ENCODE measurements at regions of chr7 and their contacts with region 1.

Region 1: GRCh38 chr7:141014524-141015395 is at the start of gene MRPS33:
- DNase-seq: peak; percentile 95
- ATAC-seq: peak; percentile 99
- H3K4me3 ChIP-seq: peak within 1 kb of the TSS; percentile 84 to 88 (median 87)
- H3K27ac ChIP-seq: peak within 1 kb of the TSS; percentile 82
- H3K4me1 ChIP-seq: peaks cover 30% of the 10 kb centered on the region
- H3K27me3 ChIP-seq: no peaks in the 10 kb centered on the region; a peak in 1 of 5 replicates
- CTCF ChIP-seq: peak; percentile 98
- EP300 ChIP-seq: peak; percentile 39 to 48; a peak in 3 of 4 replicates
- POLR2A ChIP-seq: peak; percentile 92 to 97
- RAD21 ChIP-seq: no peak; the same call in none of the 2 replicates
- total RNA-seq, gene MRPS33: 91.0 and 120 TPM in 2 replicates

Region 2: GRCh38 chr7:140517546-140518369 is 497.0 kb before region 1 on chr7:
- CTCF ChIA-PET with region 1: no interaction called
- POLR2A ChIA-PET with region 1: no interaction called
- in situ Hi-C with region 1: no loop called
- intact Hi-C with region 1: loop called (anchors 5 kb)
- DNase-seq: peak; percentile 73
- ATAC-seq: peak; percentile 96
- H3K4me3 ChIP-seq: no peak overlapping the region; a peak in 1 of 6 replicates
- H3K27ac ChIP-seq: no peak overlapping the region
- H3K4me1 ChIP-seq: peaks cover 11% of the 10 kb centered on the region; the same call in 1 of the 2 replicates
- H3K27me3 ChIP-seq: peaks cover 0 to 14% of the 10 kb centered on the region in 2 experiments; a peak in 1 of 5 replicates
- CTCF ChIP-seq: peak; percentile 98
- EP300 ChIP-seq: no peak
- POLR2A ChIP-seq: no peak
- RAD21 ChIP-seq: peak; percentile 93

Region 3: DNA sequence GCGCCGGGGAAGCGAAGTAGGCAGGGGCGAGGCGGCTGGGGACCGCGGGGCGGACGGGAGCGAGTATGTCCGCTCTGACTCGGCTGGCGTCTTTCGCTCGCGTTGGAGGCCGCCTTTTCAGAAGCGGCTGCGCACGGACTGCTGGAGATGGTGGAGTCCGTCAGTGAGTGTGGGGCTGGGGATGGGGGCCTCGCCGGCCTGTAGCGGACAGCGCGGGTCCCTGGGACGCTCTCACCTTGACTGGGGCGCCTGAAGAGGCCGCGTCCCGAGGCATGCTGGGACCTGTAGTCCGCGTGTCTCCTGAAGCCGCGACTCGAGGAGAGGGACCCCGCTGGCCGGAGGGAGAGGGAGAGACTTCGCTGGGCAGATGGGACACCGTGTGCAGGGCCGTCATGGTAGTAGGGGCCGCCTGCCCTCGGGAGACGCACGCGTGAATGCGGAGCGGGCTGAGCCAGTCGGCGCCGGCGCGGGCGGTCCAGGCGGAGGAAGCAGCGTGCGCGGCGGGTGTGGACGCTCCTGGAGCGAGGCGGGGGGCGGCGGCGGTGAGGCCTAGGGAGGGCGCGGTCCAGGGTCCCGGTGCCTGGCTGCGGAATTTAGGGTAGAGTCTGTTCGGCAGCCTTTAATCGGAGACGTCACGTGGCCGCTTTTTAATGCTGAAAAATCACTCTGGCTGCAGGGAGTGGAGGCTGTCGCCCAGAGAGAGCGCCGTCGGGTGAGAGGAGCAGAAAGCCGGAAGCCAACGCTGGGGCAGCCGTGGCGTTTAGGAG is 317.9 kb before region 1 on chr7 and contains the start of gene NDUFB2:
- CTCF ChIA-PET with region 1: no interaction called
- POLR2A ChIA-PET with region 1: no interaction called
- in situ Hi-C with region 1: loop called (anchors 25 kb)
- intact Hi-C with region 1: no loop called
- DNase-seq: peak; percentile 67
- ATAC-seq: peak; percentile 92
- H3K4me3 ChIP-seq: peak within 1 kb of the TSS; percentile 74 to 96 (median 80)
- H3K27ac ChIP-seq: peak within 1 kb of the TSS; percentile 81
- H3K4me1 ChIP-seq: peaks cover 28% of the 10 kb centered on the region
- H3K27me3 ChIP-seq: no peaks in the 10 kb centered on the region; a peak in 1 of 5 replicates
- CTCF ChIP-seq: no peak
- EP300 ChIP-seq: no peak
- POLR2A ChIP-seq: peak; percentile 86 to 95
- RAD21 ChIP-seq: peak; percentile 51; the same call in 1 of the 2 replicates
- total RNA-seq, gene NDUFB2: 221 and 276 TPM in 2 replicates

Region 4: DNA sequence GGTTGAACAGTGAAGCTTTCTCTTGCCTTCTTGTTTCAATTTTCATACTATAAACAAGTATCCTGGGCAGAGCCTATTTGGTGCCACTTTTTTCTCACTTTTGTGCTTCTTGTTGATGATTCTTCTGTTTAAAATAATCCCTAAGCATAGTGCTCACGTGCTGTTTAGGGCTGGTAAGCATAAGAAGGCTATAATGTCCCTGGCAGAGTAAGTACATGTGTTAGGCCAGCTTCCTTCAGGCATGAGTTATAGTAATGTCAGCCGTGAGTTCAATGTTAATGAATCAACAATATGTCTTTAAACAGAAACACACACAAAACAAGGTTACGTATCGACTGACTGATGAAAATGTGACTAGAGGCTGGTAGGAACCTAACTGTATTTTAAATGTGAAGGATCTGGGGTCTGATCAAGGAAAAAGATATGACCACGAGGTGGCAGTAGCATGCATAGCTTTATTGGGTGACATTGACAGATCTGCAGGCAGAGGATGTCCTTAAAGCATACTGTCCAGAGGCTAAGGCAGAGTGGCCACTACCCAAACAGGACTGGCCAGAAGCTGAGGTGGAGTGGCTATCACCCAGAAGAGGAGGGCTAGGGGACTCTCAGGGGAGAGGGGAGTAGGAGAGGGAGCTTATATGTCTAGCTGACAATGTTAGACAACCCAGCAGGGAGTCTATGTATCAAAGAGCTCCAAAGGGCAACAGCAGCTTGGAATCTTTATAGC is 203.8 kb before region 1 on chr7:
- CTCF ChIA-PET with region 1: interaction called, 37 read pairs
- POLR2A ChIA-PET with region 1: interaction called, 13 read pairs
- in situ Hi-C with region 1: loop called (anchors 5 kb)
- intact Hi-C with region 1: loop called (anchors 1 kb)
- DNase-seq: peak; percentile 76
- ATAC-seq: peak; percentile 99
- H3K4me3 ChIP-seq: no peak overlapping the region
- H3K27ac ChIP-seq: no peak overlapping the region
- H3K4me1 ChIP-seq: peaks cover 12% of the 10 kb centered on the region
- H3K27me3 ChIP-seq: no peaks in the 10 kb centered on the region
- CTCF ChIP-seq: peak; percentile 91
- EP300 ChIP-seq: no peak
- POLR2A ChIP-seq: no peak
- RAD21 ChIP-seq: peak; percentile 78

Region 5: DNA sequence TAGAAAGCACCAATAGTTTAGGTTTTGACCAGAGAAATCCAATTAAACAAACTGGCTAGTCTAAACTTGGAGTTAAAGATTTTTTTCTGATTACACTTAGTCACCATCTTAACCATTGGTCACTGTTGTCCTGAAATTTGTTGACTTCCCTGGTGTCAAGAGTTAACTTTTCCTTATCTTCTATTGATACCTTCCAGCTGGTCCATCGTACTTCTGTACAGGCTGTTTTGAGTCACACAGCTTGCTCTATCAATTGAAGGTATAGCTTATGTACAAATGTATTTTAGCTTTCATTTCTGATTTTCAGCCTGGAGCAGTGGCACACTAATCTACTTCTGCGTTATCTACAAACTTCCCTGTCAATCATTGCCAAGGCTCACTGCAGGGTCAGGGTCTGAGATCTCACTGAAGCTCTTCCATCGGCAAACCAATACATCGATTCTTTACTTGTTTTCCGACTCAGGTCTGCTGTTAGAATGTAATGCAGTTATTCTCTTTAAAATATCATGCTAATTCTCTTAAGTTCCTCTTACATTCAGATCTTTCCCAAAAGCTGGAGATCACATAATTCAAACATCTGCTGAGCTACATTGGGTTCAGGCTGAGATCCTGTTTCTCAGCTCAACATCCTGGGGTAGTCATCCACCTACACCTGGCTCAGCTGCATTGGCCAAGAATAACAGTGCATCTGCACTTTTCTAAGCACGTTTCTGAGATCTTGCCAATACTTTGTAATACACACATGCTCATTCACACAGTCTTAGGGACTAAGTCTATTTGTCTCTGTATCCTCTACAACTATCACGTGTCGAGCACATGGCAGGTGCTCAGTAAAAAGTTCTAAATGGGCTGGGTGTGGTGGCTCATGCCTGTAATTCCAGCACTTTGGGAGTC is 11.3 kb before region 1 on chr7:
- CTCF ChIA-PET with region 1: no interaction called
- POLR2A ChIA-PET with region 1: interaction called, 11 read pairs
- in situ Hi-C with region 1: no loop called
- intact Hi-C with region 1: no loop called
- DNase-seq: peak; percentile 51
- ATAC-seq: peak; percentile 90
- H3K4me3 ChIP-seq: peak overlapping the region in 2 of 3 experiments; percentile 4 to 51; a peak in 2 of 6 replicates
- H3K27ac ChIP-seq: peak overlapping the region; percentile 50
- H3K4me1 ChIP-seq: peaks cover 57% of the 10 kb centered on the region
- H3K27me3 ChIP-seq: no peaks in the 10 kb centered on the region
- CTCF ChIP-seq: no peak
- EP300 ChIP-seq: no peak
- POLR2A ChIP-seq: no peak
- RAD21 ChIP-seq: no peak